ENCODE measurements at regions of chr10 and their contacts with region 1.

Region 1: GRCh38 chr10:3828404-3829155 is 43.6 kb upstream of the KLF6 start:
- DNase-seq: no peak
- ATAC-seq: no peak
- H3K4me3 ChIP-seq: peak overlapping the region; percentile 65
- H3K27ac ChIP-seq: peak overlapping the region; percentile 78
- H3K4me1 ChIP-seq: peaks cover 27% of the 10 kb centered on the region
- H3K27me3 ChIP-seq: no peaks in the 10 kb centered on the region
- CTCF ChIP-seq: no peak

Region 2: GRCh38 chr10:3887885-3888476 is 59.4 kb after region 1 on chr10:
- intact Hi-C with region 1: loop called in 1 of 2 experiments (anchors 5 kb)
- DNase-seq: peak in 1 of 2 donors; percentile 47
- ATAC-seq: peak; percentile 48 to 56 (median 52)
- H3K4me3 ChIP-seq: no peak overlapping the region
- H3K27ac ChIP-seq: peak overlapping the region; percentile 80
- H3K4me1 ChIP-seq: peaks cover 20% of the 10 kb centered on the region
- H3K27me3 ChIP-seq: no peaks in the 10 kb centered on the region
- CTCF ChIP-seq: no peak

Measured in psoas muscle (tissue), 8 donors.